CD8-positive, alpha-beta T cell (primary cell): ENCODE measurements at regions of chr7 and their contacts with region 1.

Region 1: GRCh38 chr7:142632291-142633134 is 116.8 kb upstream of the PRSS1 start:
- DNase-seq: peak; percentile 10 to 82 (median 49)
- ATAC-seq: peak; percentile 51
- H3K4me3 ChIP-seq: no peak overlapping the region
- H3K4me3 Mint-ChIP-seq: no peak overlapping the region
- H3K27ac ChIP-seq: no peak overlapping the region
- H3K27ac Mint-ChIP-seq: peak overlapping the region; percentile 18
- H3K4me1 ChIP-seq: no peaks in the 10 kb centered on the region
- H3K4me1 Mint-ChIP-seq: peaks cover 13% of the 10 kb centered on the region
- H3K27me3 ChIP-seq: no peaks in the 10 kb centered on the region
- H3K27me3 Mint-ChIP-seq: peaks cover 2% of the 10 kb centered on the region
- CTCF ChIP-seq: peak; percentile 58

Region 2: DNA sequence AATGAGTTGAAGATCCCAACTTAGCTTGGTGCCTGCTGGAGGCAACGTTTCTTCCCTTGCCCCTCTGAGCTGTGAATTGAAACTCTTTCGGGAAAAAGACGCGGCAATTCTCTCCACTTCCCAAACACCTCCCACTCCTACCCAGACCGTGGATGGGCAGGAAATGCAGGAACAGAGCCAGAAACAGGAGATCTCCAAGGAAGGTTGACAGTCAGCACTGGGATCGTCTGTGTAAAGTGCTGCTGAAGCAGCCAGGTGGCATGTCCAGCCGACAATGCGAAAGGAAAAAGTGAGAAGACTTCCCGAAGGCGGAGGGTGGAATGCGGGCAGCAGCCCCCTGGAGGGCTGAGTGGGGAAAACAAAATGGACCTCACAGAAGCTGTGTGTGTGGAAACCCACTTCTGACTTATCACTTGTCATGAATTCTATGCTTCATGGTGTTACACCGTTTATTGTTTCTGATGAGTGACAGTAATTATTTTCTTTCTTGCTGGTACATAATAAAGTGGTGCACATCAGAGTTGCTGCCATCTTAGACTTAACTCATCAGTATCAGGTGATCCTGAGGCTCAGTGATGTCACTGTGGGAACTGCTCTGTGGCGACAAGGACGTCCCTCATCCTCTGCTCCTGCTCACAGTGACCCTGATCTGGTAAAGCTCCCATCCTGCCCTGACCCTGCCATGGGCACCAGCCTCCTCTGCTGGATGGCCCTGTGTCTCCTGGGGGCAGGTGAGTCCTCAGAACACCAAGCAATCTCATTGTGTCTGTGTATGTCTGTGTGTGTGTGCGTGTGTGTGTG is 103.7 kb before region 1 on chr7:
- CTCF ChIA-PET with region 1: no interaction called
- POLR2A ChIA-PET with region 1: no interaction called
- intact Hi-C with region 1: no loop called
- DNase-seq: peak in 2 of 9 experiments; percentile 25 to 40
- ATAC-seq: peak; percentile 69
- H3K4me3 ChIP-seq: peak overlapping the region in 1 of 2 experiments; percentile 18
- H3K4me3 Mint-ChIP-seq: peak overlapping the region; percentile 67
- H3K27ac ChIP-seq: peak overlapping the region in 1 of 2 experiments; percentile 18
- H3K27ac Mint-ChIP-seq: peak overlapping the region; percentile 74
- H3K4me1 ChIP-seq: no peaks in the 10 kb centered on the region
- H3K4me1 Mint-ChIP-seq: no peaks in the 10 kb centered on the region
- H3K27me3 ChIP-seq: no peaks in the 10 kb centered on the region
- H3K27me3 Mint-ChIP-seq: no peaks in the 10 kb centered on the region
- CTCF ChIP-seq: no peak

Region 3: GRCh38 chr7:142587578-142588191 is 44.8 kb before region 1 on chr7:
- CTCF ChIA-PET with region 1: no interaction called
- POLR2A ChIA-PET with region 1: no interaction called
- intact Hi-C with region 1: no loop called
- DNase-seq: peak in 2 of 9 experiments; percentile 55 to 64
- ATAC-seq: peak; percentile 71
- H3K4me3 ChIP-seq: no peak overlapping the region
- H3K4me3 Mint-ChIP-seq: no peak overlapping the region
- H3K27ac ChIP-seq: no peak overlapping the region
- H3K27ac Mint-ChIP-seq: no peak overlapping the region
- H3K4me1 ChIP-seq: no peaks in the 10 kb centered on the region
- H3K4me1 Mint-ChIP-seq: peaks cover 2% of the 10 kb centered on the region
- H3K27me3 ChIP-seq: no peaks in the 10 kb centered on the region
- H3K27me3 Mint-ChIP-seq: no peaks in the 10 kb centered on the region
- CTCF ChIP-seq: no peak

Region 4: GRCh38 chr7:142997456-142997989 is 365.0 kb after region 1 on chr7:
- CTCF ChIA-PET with region 1: interaction called, 4 read pairs
- POLR2A ChIA-PET with region 1: no interaction called
- intact Hi-C with region 1: loop called (anchors 2 kb)
- DNase-seq: no peak
- ATAC-seq: no peak
- H3K4me3 ChIP-seq: no peak overlapping the region
- H3K4me3 Mint-ChIP-seq: no peak overlapping the region
- H3K27ac ChIP-seq: no peak overlapping the region
- H3K27ac Mint-ChIP-seq: no peak overlapping the region
- H3K4me1 ChIP-seq: no peaks in the 10 kb centered on the region
- H3K4me1 Mint-ChIP-seq: no peaks in the 10 kb centered on the region
- H3K27me3 ChIP-seq: no peaks in the 10 kb centered on the region
- H3K27me3 Mint-ChIP-seq: no peaks in the 10 kb centered on the region
- CTCF ChIP-seq: no peak